ENCODE measurements at regions of chr6 and their contacts with region 1.

Region 1: GRCh38 chr6:28207510-28208110 is 17.5 kb upstream of the ZSCAN9 start:
- DNase-seq: peak; percentile 34
- ATAC-seq: peak; percentile 76
- H3K4me3 ChIP-seq: peak overlapping the region; percentile 48
- H3K27ac ChIP-seq: no peak overlapping the region
- H3K4me1 ChIP-seq: no peaks in the 10 kb centered on the region
- H3K27me3 ChIP-seq: peaks cover 39% of the 10 kb centered on the region
- CTCF ChIP-seq: no peak
- POLR2A ChIP-seq: no peak
- RAD21 ChIP-seq: no peak

Region 2: GRCh38 chr6:28161410-28162079 is 46.1 kb before region 1 on chr6:
- CTCF ChIA-PET with region 1: no interaction called
- POLR2A ChIA-PET with region 1: interaction called, 3 read pairs
- dilution Hi-C with region 1: no loop called
- in situ Hi-C with region 1: no loop called
- intact Hi-C with region 1: loop called (anchors 5 kb)
- DNase-seq: peak; percentile 68
- ATAC-seq: peak; percentile 95
- H3K4me3 ChIP-seq: peak overlapping the region; percentile 43
- H3K27ac ChIP-seq: peak overlapping the region; percentile 22
- H3K4me1 ChIP-seq: no peaks in the 10 kb centered on the region
- H3K27me3 ChIP-seq: no peaks in the 10 kb centered on the region
- CTCF ChIP-seq: no peak
- POLR2A ChIP-seq: peak; percentile 37; the same call in 1 of the 2 replicates
- RAD21 ChIP-seq: no peak

Region 3: GRCh38 chr6:28474441-28475219 is 267.0 kb after region 1 on chr6:
- CTCF ChIA-PET with region 1: no interaction called
- POLR2A ChIA-PET with region 1: no interaction called
- dilution Hi-C with region 1: no loop called
- in situ Hi-C with region 1: no loop called
- intact Hi-C with region 1: no loop called
- DNase-seq: peak; percentile 92
- ATAC-seq: peak; percentile 98
- H3K4me3 ChIP-seq: peak overlapping the region; percentile 72
- H3K27ac ChIP-seq: no peak overlapping the region
- H3K4me1 ChIP-seq: no peaks in the 10 kb centered on the region
- H3K27me3 ChIP-seq: peaks cover 7% of the 10 kb centered on the region
- CTCF ChIP-seq: no peak
- POLR2A ChIP-seq: no peak
- RAD21 ChIP-seq: no peak